Lower lobe of right lung (tissue), 2 donors: ENCODE measurements at regions of chr2 and their contacts with region 1.

Region 1: GRCh38 chr2:149597668-149598326 is 10.2 kb upstream of the MMADHC start:
- DNase-seq: no peak
- ATAC-seq: peak; percentile 93
- H3K4me3 ChIP-seq: no peak overlapping the region
- H3K27ac ChIP-seq: no peak overlapping the region
- H3K4me1 ChIP-seq: no peaks in the 10 kb centered on the region
- H3K27me3 ChIP-seq: no peaks in the 10 kb centered on the region
- CTCF ChIP-seq: peak; percentile 79

Region 2: GRCh38 chr2:150487537-150488429 is 890.0 kb after region 1 on chr2 and contains the start of gene RND3:
- intact Hi-C with region 1: loop called (anchors 10 kb)
- DNase-seq: peak; percentile 93
- ATAC-seq: peak; percentile 77 to 83
- H3K4me3 ChIP-seq: peak within 1 kb of the TSS; percentile 71
- H3K27ac ChIP-seq: peak within 1 kb of the TSS; percentile 90
- H3K4me1 ChIP-seq: peaks cover 22% of the 10 kb centered on the region
- H3K27me3 ChIP-seq: peaks cover 18% of the 10 kb centered on the region
- CTCF ChIP-seq: peak; percentile 80
- total RNA-seq, gene RND3: 20.8 TPM